ENCODE measurements at regions of chr6 and their contacts with region 1.

Region 1: GRCh38 chr6:130365166-130366106 is at the start of gene TMEM200A:
- ATAC-seq: peak; percentile 68 to 86 (median 74)
- H3K4me3 ChIP-seq: peak within 1 kb of the TSS; percentile 68 to 92 (median 89)
- H3K27ac ChIP-seq: peak within 1 kb of the TSS; percentile 12 to 44
- H3K4me1 ChIP-seq: peaks cover 0 to 6% of the 10 kb centered on the region in 2 donors
- total RNA-seq, gene TMEM200A: 0.59 to 31.7 (median 8.7) TPM in 7 of 8 experiments, not detected in the other

Region 2: GRCh38 chr6:130105996-130106704 is 259.3 kb before region 1 on chr6:
- in situ Hi-C with region 1: no loop called
- ATAC-seq: no peak
- H3K4me3 ChIP-seq: no peak overlapping the region
- H3K27ac ChIP-seq: no peak overlapping the region
- H3K4me1 ChIP-seq: no peaks in the 10 kb centered on the region

Region 3: GRCh38 chr6:130632277-130632676 is 266.8 kb after region 1 on chr6:
- in situ Hi-C with region 1: no loop called
- ATAC-seq: peak in 5 of 8 experiments; percentile 75 to 98 (median 94)
- H3K4me3 ChIP-seq: no peak overlapping the region
- H3K27ac ChIP-seq: no peak overlapping the region
- H3K4me1 ChIP-seq: peaks cover 12 to 13% of the 10 kb centered on the region in 2 donors

Region 4: GRCh38 chr6:130697995-130698535 is 332.6 kb after region 1 on chr6:
- in situ Hi-C with region 1: loop called in 4 of 9 experiments (anchors 25 kb)
- ATAC-seq: peak; percentile 91 to 99 (median 96)
- H3K4me3 ChIP-seq: no peak overlapping the region
- H3K27ac ChIP-seq: no peak overlapping the region
- H3K4me1 ChIP-seq: peaks cover 6 to 17% of the 10 kb centered on the region in 2 donors

Region 5: DNA sequence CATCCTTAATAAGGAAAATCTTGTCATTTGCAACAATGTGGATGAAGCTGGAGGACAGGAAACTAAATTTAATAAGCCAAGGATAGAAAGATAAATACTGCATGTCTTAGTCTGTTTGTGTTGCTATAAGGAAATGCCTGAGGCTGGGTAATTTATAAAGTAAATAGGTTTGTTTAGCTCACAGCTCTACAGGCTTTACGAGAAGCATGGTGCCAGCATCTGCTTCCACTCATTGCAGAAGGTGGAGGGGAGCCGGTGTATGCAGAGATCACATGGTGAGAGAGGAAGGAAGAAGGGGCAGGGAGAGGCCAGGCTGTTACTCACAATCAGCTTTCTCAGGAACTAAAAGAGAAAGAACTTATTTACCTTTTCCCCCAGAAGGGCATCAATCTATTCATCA is 342.9 kb after region 1 on chr6:
- in situ Hi-C with region 1: loop called in 1 of 9 experiments (anchors 25 kb)
- ATAC-seq: peak in 4 of 8 experiments; percentile 56 to 97 (median 78)
- H3K4me3 ChIP-seq: no peak overlapping the region
- H3K27ac ChIP-seq: no peak overlapping the region
- H3K4me1 ChIP-seq: peaks cover 11 to 13% of the 10 kb centered on the region in 2 donors

Region 6: GRCh38 chr6:130843575-130844320 is 478.3 kb after region 1 on chr6:
- in situ Hi-C with region 1: loop called in 1 of 9 experiments (anchors 25 kb)
- ATAC-seq: peak; percentile 35 to 92 (median 80)
- H3K4me3 ChIP-seq: no peak overlapping the region
- H3K27ac ChIP-seq: no peak overlapping the region
- H3K4me1 ChIP-seq: no peaks in the 10 kb centered on the region